Activated CD4-positive, alpha-beta T cell treated with anti-CD3 and anti-CD28 coated beads for 36 hours (primary cell): ENCODE measurements at regions of chr7 and their contacts with region 1.

Region 1: GRCh38 chr7:131225619-131226513 is 101.8 kb upstream of the MKLN1 start:
- DNase-seq: no peak
- ATAC-seq: no peak
- H3K4me3 Mint-ChIP-seq: no peak overlapping the region
- H3K27ac Mint-ChIP-seq: no peak overlapping the region
- H3K4me1 Mint-ChIP-seq: peaks cover 6% of the 10 kb centered on the region
- H3K27me3 Mint-ChIP-seq: no peaks in the 10 kb centered on the region

Region 2: DNA sequence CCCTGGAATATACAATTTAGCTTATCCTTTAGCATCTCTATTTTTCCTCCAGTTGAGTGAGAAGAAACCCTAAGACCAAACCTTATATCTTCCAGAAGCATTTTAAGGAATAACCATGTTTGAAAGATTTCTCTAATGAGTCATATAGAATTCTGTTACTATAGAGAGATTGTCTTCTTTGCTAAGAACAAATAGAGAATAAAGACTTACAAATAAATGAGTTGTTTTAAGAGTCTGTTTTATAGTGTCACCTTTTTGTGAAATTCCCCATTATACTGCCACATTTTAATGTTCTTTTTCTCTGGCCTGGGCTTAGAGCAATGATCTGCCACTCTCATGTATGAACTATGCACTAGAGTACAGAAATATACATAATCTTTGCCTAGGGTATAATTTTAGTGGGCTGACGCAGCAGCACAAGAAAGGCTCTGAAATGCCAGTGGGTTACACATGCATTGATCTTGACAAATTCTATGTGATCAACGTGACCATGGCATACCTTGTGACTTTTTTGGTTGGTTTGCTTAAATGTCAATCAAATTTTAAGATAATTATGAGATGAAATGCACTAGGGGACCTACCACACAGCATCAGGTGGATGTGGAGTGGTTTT is 43.3 kb before region 1 on chr7:
- CTCF ChIA-PET with region 1: no interaction called
- POLR2A ChIA-PET with region 1: no interaction called
- intact Hi-C with region 1: no loop called
- DNase-seq: no peak
- ATAC-seq: no peak
- H3K4me3 Mint-ChIP-seq: no peak overlapping the region
- H3K27ac Mint-ChIP-seq: peak overlapping the region; percentile 63
- H3K4me1 Mint-ChIP-seq: peaks cover 38% of the 10 kb centered on the region
- H3K27me3 Mint-ChIP-seq: no peaks in the 10 kb centered on the region

Region 3: DNA sequence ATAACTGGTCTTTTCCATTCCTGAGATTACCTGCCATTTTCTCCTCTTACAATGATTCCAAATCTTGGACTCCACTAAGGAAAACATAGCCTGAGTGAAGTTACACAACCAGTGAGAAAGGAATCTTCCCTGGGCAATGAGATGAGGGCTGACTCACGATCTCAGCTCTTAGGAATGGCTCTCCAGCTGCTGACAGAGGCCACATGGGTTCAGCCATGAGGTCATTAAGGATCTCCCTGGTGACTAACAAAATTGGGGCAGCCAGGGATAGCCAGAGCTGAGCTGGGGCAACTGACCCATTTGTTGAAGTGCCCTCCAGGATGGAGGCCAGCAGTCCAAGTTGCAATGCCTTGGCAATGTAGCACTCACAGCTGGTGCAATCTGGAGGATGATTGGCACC is 23.1 kb after region 1 on chr7:
- CTCF ChIA-PET with region 1: no interaction called
- POLR2A ChIA-PET with region 1: interaction called, 3 read pairs
- intact Hi-C with region 1: loop called in 1 of 2 experiments (anchors 1 kb)
- DNase-seq: no peak
- ATAC-seq: no peak
- H3K4me3 Mint-ChIP-seq: no peak overlapping the region
- H3K27ac Mint-ChIP-seq: no peak overlapping the region
- H3K4me1 Mint-ChIP-seq: peaks cover 2% of the 10 kb centered on the region
- H3K27me3 Mint-ChIP-seq: peaks cover 8% of the 10 kb centered on the region